Esophagus muscularis mucosa (tissue), 4 donors: ENCODE measurements at regions of chr3 and their contacts with region 1.

Region 1: GRCh38 chr3:38521391-38521987 is 25.3 kb downstream of the EXOG start:
- DNase-seq: no peak
- H3K4me3 ChIP-seq: no peak overlapping the region
- H3K27ac ChIP-seq: no peak overlapping the region
- H3K4me1 ChIP-seq: peaks cover 0 to 19% (median 0%) of the 10 kb centered on the region in 4 donors
- H3K27me3 ChIP-seq: no peaks in the 10 kb centered on the region
- CTCF ChIP-seq: peak; percentile 81 to 94 (median 90)
- EP300 ChIP-seq: no peak
- POLR2A ChIP-seq: no peak

Region 2: GRCh38 chr3:38460377-38461270 is 60.9 kb before region 1 on chr3:
- intact Hi-C with region 1: no loop called
- DNase-seq: peak; percentile 90
- H3K4me3 ChIP-seq: no peak overlapping the region
- H3K27ac ChIP-seq: peak overlapping the region; percentile 32 to 59 (median 48)
- H3K4me1 ChIP-seq: peaks cover 42 to 60% (median 59%) of the 10 kb centered on the region in 4 donors
- H3K27me3 ChIP-seq: no peaks in the 10 kb centered on the region
- CTCF ChIP-seq: no peak
- EP300 ChIP-seq: no peak
- POLR2A ChIP-seq: no peak

Region 3: DNA sequence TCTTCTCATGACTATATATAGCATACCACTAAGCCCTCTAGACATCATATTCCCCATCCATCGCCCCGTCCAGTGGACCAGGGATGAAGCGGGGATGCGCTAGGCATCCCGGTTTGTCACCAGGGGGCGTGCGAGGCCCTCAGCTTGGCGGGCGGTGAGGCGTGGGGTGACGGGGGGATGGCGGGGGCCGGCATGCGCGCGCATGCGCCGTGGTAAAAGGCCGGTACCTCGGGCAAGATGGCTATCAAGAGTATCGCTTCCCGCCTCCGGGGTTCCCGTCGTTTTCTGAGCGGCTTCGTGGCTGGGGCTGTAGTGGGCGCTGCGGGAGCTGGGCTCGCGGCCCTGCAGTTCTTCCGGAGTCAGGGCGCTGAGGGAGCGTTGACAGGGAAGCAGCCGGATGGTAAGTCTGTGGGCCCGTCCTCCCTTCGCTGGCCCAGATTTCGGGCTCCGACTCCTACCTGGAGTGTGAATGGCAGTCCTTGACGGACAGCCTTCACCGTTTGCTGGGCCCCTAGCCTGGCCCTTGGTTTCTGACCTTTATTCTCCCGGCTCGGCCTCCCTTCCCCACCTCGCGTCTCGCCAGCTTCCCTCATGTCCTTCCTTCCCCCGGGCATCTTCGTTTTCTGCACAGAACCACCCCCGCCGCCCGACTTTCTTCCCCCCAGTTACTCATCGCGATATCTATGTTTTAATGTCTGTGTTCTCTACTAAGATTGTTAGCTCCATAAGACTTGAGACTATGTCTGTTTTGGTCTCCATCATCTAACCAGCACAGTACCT is 25.2 kb before region 1 on chr3 and contains the start of gene EXOG:
- intact Hi-C with region 1: loop called (anchors 2 kb)
- DNase-seq: peak; percentile 97
- H3K4me3 ChIP-seq: peak within 1 kb of the TSS; percentile 73 to 85 (median 80)
- H3K27ac ChIP-seq: peak within 1 kb of the TSS; percentile 79 to 87 (median 82)
- H3K4me1 ChIP-seq: peaks cover 19 to 47% (median 35%) of the 10 kb centered on the region in 4 donors
- H3K27me3 ChIP-seq: no peaks in the 10 kb centered on the region
- CTCF ChIP-seq: peak; percentile 83 to 97 (median 95)
- EP300 ChIP-seq: no peak
- POLR2A ChIP-seq: no peak
- total RNA-seq, gene EXOG: 14.9 to 37.8 (median 30.8) TPM

Region 4: GRCh38 chr3:38627956-38628355 is 106.5 kb after region 1 on chr3:
- intact Hi-C with region 1: no loop called
- DNase-seq: no peak
- H3K4me3 ChIP-seq: no peak overlapping the region
- H3K27ac ChIP-seq: no peak overlapping the region
- H3K4me1 ChIP-seq: peaks cover 0 to 7% (median 0%) of the 10 kb centered on the region in 4 donors
- H3K27me3 ChIP-seq: peaks cover 0 to 7% (median 0%) of the 10 kb centered on the region in 4 donors
- CTCF ChIP-seq: no peak
- EP300 ChIP-seq: no peak
- POLR2A ChIP-seq: no peak

Region 5: GRCh38 chr3:38651154-38651789 is 129.8 kb after region 1 on chr3:
- intact Hi-C with region 1: loop called (anchors 2 kb)
- DNase-seq: peak; percentile 93
- H3K4me3 ChIP-seq: peak overlapping the region in 1 of 4 donors; percentile 6
- H3K27ac ChIP-seq: no peak overlapping the region
- H3K4me1 ChIP-seq: peaks cover 12 to 31% (median 24%) of the 10 kb centered on the region in 4 donors
- H3K27me3 ChIP-seq: peaks cover 0 to 77% (median 19%) of the 10 kb centered on the region in 4 donors
- CTCF ChIP-seq: peak; percentile 15 to 92 (median 86)
- EP300 ChIP-seq: no peak
- POLR2A ChIP-seq: no peak